ENCODE measurements at regions of chr17 and their contacts with region 1.

Region 1: DNA sequence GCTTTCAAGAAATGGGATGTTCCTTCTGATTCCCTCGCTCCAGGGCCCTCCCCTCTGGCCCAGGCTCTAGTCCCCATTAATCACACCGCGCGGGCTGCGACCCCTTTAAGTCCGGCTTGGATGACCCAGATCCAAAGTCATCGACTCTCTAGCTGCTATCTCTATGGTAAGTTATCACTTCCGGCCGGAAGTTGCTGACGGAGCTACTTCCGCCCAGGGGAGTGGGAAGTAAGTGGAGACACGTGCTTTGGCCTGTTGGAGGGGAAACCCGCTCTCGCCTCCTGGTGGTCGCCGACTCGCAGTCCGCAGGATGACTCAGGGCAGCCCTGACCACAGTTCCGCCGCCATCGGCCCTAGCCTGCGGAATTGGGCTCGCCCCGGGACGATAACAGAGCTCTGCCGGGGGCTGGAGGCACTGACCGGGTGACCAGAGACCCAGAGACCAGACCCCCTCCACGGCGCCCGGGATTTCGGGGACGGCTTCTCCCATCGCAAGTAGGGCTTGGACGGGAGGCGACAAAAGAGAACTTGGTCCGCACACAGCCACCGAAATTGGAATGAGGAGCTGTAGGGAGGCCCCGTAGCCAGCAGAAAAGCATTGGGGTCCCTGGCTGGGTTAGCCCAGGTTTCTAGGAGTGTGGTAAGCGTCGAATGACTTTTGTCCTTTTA is 52.2 kb upstream of the SEC14L1 start:
- DNase-seq: peak; percentile 93
- H3K4me3 Mint-ChIP-seq: peak overlapping the region; percentile 97
- H3K27ac Mint-ChIP-seq: peak overlapping the region; percentile 99
- H3K4me1 Mint-ChIP-seq: peaks cover 17% of the 10 kb centered on the region
- H3K27me3 Mint-ChIP-seq: no peaks in the 10 kb centered on the region
- CTCF ChIP-seq: peak; percentile 22

Region 2: DNA sequence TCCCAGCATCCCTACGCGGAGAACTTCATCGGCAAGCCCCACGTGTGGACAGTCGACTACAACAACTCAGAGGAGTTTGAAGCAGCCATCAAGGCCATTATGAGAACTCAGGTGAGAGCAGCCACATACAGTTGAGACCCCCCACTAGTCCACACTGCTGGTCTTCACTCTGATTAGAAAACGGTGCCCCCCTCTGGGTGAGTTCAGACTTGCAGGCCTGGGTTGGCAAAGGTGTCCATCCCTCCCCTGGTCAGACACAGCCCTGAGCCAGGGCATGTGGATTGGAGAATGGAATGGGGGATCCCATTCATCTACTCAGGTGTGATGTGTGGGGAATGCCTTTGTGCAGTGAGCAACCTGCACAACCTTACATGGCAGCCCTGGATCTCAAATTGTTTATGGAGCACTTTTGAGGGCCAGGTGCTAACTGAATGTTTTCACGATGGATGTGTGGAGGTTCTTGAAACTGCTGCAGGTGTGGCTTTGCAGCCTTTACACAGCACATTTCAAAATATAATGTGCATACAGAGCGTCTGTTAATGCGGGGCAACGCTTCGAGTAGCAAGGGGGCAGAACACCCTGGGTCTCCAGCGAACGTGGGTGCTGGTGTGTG is 147.7 kb before region 1 on chr17:
- CTCF ChIA-PET with region 1: no interaction called
- POLR2A ChIA-PET with region 1: no interaction called
- intact Hi-C with region 1: no loop called
- DNase-seq: peak; percentile 6
- H3K4me3 Mint-ChIP-seq: no peak overlapping the region
- H3K27ac Mint-ChIP-seq: no peak overlapping the region
- H3K4me1 Mint-ChIP-seq: no peaks in the 10 kb centered on the region
- H3K27me3 Mint-ChIP-seq: no peaks in the 10 kb centered on the region
- CTCF ChIP-seq: no peak

Region 3: DNA sequence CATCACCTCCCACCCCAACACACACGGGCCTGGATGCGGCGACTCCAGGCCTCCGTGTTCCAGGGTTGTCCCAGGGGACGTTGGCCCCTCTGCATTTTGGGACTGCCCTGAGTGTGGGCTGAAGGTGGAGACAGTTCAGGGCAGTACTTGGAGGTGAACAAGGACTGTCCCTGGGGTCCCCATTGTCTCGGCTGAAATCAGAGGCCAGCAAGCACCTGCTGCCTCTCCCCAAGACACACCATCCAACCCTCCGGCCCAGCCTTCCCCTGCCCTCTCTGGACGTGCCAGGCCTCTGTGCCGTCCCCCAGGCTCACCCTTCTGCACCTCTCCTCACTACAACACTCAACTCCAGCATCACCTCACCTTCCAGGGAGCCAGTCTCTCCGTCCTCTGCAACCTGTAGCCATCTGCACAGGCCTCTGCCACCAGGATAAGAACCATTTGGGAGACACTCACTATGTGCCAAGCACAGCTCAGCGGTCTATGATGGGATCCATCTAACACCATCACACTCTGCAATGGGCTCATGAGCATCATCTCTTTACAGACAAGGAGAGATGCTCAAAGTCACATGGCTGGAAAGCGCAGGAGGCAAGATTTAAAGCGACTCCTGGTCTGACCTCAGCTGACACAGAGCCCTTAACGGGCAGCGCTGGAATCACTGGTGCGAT is 52.3 kb before region 1 on chr17:
- CTCF ChIA-PET with region 1: no interaction called
- POLR2A ChIA-PET with region 1: no interaction called
- intact Hi-C with region 1: no loop called
- DNase-seq: no peak
- H3K4me3 Mint-ChIP-seq: no peak overlapping the region
- H3K27ac Mint-ChIP-seq: no peak overlapping the region
- H3K4me1 Mint-ChIP-seq: no peaks in the 10 kb centered on the region
- H3K27me3 Mint-ChIP-seq: peaks cover 27% of the 10 kb centered on the region
- CTCF ChIP-seq: no peak

Region 4: GRCh38 chr17:77127735-77128361 is 39.3 kb after region 1 on chr17:
- CTCF ChIA-PET with region 1: interaction called, 10 read pairs
- POLR2A ChIA-PET with region 1: interaction called, 11 read pairs
- intact Hi-C with region 1: no loop called
- DNase-seq: peak; percentile 93
- H3K4me3 Mint-ChIP-seq: peak overlapping the region; percentile 55
- H3K27ac Mint-ChIP-seq: peak overlapping the region; percentile 46
- H3K4me1 Mint-ChIP-seq: peaks cover 40% of the 10 kb centered on the region
- H3K27me3 Mint-ChIP-seq: no peaks in the 10 kb centered on the region
- CTCF ChIP-seq: no peak

Region 5: DNA sequence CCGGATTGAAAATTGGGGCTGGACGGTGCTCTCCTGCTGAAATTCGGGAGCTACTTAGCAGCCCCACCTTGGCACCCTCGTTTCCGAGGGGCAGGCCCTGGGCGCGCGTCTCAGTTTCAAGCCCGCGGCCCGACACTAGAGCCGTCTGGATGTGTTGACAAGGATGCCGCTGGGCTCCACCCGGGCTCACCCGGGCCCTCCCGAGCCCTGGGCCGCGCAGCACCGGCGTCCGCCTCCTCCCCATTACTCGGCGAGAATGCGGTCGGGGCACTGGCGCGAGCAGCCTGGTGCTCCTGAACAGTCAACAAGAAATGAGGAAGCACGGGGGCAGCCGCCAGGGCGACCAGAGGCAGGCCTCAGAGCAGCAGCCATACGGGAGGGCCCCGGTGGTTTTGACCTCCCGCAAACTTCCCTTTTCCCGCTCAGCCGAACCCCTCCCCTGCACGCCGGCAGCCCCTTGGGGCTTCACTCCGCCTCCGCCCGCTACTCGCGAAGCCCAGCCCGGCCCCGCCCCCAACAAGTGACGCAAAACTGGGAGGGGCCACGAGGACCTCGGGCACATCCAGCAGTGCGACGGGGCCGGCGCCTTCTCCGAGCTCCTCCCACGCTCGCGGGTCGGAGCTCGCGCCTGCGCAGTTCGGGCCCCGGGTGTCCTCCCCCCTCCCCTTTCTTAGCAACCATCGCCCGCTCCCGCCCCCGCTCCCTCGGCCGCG is 51.7 kb after region 1 on chr17:
- CTCF ChIA-PET with region 1: interaction called, 9 read pairs
- POLR2A ChIA-PET with region 1: interaction called, 23 read pairs
- intact Hi-C with region 1: loop called (anchors 2 kb)
- DNase-seq: peak; percentile 97
- H3K4me3 Mint-ChIP-seq: peak overlapping the region; percentile 73
- H3K27ac Mint-ChIP-seq: peak overlapping the region; percentile 57
- H3K4me1 Mint-ChIP-seq: peaks cover 18% of the 10 kb centered on the region
- H3K27me3 Mint-ChIP-seq: no peaks in the 10 kb centered on the region
- CTCF ChIP-seq: no peak

Region 6: DNA sequence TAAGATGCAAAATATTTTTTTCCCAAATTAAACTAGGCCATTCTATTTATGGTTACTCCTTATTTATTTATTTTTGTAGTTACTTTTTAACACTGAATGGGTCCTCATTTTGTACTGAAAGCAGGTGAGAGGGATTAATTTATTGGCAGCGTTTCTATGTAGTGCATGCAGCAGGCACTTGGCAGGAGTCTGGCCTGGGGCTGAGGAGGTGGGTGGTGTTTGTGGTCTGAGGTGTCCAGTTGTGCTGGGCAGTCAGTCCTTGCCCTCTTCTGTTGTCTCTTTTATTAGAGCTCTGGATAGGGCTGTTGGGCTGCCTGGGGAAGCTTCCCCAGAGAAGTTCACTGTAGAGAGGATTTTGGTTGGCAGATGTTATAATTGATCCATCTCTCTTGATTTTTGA is 64.9 kb after region 1 on chr17:
- CTCF ChIA-PET with region 1: no interaction called
- POLR2A ChIA-PET with region 1: no interaction called
- intact Hi-C with region 1: no loop called
- DNase-seq: peak; percentile 47
- H3K4me3 Mint-ChIP-seq: no peak overlapping the region
- H3K27ac Mint-ChIP-seq: no peak overlapping the region
- H3K4me1 Mint-ChIP-seq: peaks cover 10% of the 10 kb centered on the region
- H3K27me3 Mint-ChIP-seq: no peaks in the 10 kb centered on the region
- CTCF ChIP-seq: no peak

Region 7: DNA sequence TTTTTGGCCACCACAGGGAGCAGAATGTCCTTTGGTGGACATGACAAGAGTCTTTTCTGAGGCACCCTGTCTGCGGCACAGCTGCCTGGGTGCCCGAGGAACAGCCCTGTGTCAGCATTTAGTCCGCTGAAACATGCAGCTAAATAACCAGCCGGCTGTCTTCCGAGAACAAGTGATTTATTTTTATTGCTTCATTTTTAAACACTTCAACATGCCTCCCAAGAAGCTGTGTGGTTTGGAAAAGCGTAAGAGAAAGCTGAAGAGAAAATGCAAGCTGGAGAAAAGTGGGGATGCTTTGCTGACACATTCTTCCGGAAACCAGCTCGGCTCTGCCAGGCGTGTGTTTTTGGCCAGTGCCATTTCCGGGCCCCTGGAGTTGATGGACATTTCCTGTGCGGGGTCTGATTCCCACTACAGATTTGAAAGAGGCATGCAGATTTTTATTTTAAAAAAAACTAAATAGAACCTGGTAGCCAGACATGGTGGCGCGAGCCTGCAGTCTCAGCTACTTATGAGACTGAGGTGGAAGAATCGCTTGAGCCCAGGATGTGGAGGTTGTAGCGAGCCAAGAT is 146.9 kb after region 1 on chr17:
- CTCF ChIA-PET with region 1: interaction called, 19 read pairs
- POLR2A ChIA-PET with region 1: interaction called, 3 read pairs
- intact Hi-C with region 1: no loop called
- DNase-seq: peak; percentile 14
- H3K4me3 Mint-ChIP-seq: no peak overlapping the region
- H3K27ac Mint-ChIP-seq: no peak overlapping the region
- H3K4me1 Mint-ChIP-seq: peaks cover 7% of the 10 kb centered on the region
- H3K27me3 Mint-ChIP-seq: no peaks in the 10 kb centered on the region
- CTCF ChIP-seq: no peak

Region 8: GRCh38 chr17:77247048-77247541 is 158.5 kb after region 1 on chr17:
- CTCF ChIA-PET with region 1: interaction called, 38 read pairs
- POLR2A ChIA-PET with region 1: no interaction called
- intact Hi-C with region 1: loop called (anchors 1 kb)
- DNase-seq: peak; percentile 76
- H3K4me3 Mint-ChIP-seq: peak overlapping the region; percentile 47
- H3K27ac Mint-ChIP-seq: no peak overlapping the region
- H3K4me1 Mint-ChIP-seq: no peaks in the 10 kb centered on the region
- H3K27me3 Mint-ChIP-seq: peaks cover 18% of the 10 kb centered on the region
- CTCF ChIP-seq: peak; percentile 98

Region 9: DNA sequence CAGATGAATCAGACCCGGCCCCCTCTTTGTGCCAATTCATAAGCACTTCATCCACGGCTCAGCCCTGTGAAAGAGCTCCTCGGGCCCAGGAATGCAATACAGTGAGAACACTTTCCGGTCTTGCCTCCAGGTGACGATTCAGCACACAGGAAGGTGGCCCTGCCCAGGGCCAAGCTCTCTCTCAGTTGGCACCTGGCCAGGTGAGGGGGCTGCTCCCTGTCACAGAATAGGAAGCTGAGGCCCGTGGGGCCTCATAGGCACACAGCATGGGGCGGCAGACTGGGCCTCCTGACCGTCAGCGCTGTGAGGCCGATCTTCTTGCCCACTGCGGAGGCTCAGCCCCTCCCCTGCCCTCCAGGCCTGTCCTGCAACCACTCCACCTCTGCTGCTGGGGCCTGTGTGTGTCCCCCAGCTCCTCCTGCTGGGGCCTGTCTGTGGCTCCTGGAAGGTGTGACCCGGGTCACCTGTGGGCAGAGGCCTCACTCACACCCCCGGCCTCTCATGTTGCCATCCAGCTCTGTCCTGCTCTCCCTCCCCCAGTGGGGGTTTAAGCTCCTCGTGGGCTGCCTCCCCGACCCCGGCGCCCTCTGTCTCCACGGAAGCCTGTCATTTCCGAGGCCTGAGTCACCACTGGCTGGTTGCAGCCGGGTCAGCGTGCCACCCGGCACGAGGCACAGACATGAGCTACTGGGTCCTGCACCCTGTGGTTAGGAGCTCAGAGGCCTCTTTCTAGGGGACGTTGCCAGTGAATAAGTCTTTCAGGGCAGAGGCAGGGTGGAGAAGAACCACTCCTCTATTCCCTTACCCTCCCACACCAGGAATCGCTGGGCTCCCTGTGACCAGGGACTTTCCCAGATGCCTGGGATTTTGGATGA is 166.6 kb after region 1 on chr17:
- CTCF ChIA-PET with region 1: interaction called, 38 read pairs
- POLR2A ChIA-PET with region 1: interaction called, 18 read pairs
- intact Hi-C with region 1: no loop called
- DNase-seq: peak; percentile 94
- H3K4me3 Mint-ChIP-seq: no peak overlapping the region
- H3K27ac Mint-ChIP-seq: peak overlapping the region; percentile 99
- H3K4me1 Mint-ChIP-seq: peaks cover 13% of the 10 kb centered on the region
- H3K27me3 Mint-ChIP-seq: no peaks in the 10 kb centered on the region
- CTCF ChIP-seq: no peak

Region 10: DNA sequence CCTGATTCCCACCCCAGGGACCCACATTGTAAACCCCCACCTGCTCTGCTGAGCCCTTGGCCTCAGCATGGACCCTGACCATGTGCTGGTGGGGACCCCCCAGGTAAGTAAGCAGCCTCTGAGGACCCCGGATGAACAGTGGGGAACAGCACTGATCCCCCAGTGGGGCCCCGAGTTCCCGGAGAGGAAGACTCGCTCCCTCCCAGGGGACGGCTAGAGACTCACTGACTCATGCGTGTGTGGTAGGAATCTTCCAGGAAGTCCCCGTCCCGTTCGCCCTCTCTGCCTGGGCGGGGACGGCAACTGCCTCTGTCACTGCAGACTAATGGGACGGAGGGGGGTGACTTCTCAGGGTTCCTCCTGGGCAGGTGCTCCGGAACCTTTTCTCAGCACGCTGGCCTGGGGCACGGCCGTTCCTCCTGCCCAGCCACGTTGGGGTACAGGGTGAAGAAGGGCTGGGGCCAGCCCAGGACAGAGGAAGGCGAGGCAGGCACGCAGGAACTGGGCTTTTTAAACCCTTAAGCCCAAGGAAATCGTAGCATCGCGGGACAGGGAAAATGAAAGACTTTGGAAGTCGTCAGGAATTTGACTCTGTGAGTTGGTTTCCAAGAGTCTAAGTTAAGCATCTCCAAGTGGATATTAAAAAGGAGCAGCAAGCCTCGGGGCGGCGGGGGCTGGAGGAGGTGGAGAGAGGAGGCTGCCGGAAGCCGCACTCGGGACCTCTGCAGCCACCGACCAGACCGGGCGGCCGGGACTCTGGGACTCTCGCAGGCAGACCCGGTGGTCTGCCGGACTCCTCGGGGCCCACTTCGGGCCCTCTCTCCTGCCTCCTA is 230.8 kb after region 1 on chr17:
- CTCF ChIA-PET with region 1: no interaction called
- POLR2A ChIA-PET with region 1: interaction called, 10 read pairs
- intact Hi-C with region 1: no loop called
- DNase-seq: peak; percentile 90
- H3K4me3 Mint-ChIP-seq: peak overlapping the region; percentile 88
- H3K27ac Mint-ChIP-seq: peak overlapping the region; percentile 89
- H3K4me1 Mint-ChIP-seq: peaks cover 46% of the 10 kb centered on the region
- H3K27me3 Mint-ChIP-seq: no peaks in the 10 kb centered on the region
- CTCF ChIP-seq: no peak